ENCODE measurements at regions of chr9 and their contacts with region 1.

Region 1: DNA sequence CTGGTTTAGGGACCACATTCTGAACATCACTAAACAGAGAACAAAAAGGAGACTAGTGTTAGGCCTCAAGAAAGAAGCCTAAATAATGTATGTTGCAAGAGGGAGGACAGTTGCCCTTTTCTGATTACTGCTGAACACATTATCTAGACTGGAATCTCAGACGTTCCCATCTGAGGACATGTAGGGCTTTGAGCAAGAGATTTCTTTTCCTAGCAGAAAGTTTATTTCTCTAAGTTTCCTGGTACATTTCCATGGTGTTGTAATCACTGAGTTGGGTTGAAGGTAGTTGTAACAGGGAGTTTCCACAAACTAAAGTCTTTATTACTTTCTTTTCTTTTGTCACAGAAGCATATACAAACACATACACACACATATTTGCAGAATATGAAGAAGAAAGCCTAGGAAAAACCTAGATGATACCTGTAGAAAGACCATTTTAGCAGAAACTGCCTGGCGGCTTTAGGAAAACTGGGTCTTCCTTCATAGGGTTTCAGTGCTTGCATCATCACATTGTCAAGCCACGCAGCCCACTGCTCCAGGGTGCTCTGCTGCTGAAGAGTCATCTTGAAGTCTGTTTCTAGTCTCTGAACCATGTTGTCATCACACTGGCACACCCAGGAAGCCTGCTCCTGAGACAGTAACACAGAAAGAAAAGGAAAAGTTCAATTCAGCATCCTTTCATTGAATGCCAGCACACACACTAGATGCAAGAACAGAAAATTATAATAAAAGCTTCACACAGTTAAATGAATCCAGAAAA is 269.1 kb downstream of the RFX3 start:
- DNase-seq: no peak
- H3K4me3 ChIP-seq: no peak overlapping the region
- CTCF ChIP-seq: no peak
- POLR2A ChIP-seq: no peak

Region 2: DNA sequence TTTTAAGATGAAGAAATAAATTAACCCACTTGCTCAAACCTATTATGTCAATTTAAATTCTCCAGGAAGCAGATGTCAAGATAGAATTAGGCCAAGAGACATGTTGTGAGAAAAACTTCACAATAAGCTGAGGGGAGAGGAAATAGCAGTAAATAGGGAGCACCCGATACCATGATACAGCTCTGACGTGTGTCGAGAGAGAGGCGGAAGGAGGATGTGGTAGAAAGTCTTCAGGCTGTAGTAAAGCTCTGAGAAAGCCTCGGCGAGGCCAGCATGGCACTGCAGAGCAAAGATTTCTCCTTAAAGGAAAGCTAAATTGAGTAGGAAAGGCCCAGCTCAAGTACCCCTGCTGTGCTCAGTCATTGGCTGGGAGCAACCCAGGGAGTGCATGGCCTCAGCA is 406.8 kb before region 1 on chr9:
- intact Hi-C with region 1: no loop called
- DNase-seq: no peak
- H3K4me3 ChIP-seq: no peak overlapping the region
- CTCF ChIP-seq: no peak
- POLR2A ChIP-seq: no peak

Region 3: DNA sequence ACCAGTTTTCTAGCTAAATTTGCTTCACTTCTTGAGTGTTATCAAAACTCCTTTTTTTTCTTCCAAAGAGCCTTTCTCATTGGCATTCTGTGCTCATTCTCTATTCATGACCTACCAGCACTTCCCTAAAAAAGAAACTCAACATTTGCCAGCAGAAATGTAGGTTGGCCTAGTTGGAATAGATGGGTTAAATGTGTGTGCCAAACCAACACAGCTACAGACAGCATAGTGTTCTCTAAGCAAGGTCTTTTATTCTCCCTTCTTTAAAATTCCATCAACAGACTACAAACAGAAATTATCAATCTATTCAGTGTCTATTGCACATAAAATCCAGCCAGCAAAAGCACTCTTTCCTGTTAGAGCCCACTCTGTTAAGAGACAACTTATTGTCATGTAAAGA is 157.1 kb before region 1 on chr9:
- intact Hi-C with region 1: no loop called
- DNase-seq: no peak
- H3K4me3 ChIP-seq: no peak overlapping the region
- CTCF ChIP-seq: no peak
- POLR2A ChIP-seq: no peak

Region 4: DNA sequence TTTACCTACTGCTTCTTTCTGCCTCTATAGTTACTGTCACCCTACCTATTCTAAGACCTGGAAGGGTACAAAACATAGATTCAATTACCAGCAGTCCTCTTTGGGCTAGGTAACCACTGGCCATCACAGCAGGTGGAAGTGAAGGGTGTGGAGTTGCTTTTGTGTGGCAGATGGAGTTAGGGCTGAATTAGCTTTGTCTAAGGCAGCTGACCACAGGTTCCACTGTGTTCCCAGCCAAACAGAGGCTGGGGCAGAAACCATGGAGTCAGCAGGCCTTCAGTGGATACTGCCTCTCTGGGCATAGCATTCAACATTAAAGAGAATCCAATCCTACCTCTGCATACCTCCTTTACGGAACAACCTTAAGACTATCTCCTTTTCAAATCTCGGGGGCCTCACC is 14.8 kb after region 1 on chr9:
- intact Hi-C with region 1: no loop called
- DNase-seq: no peak
- H3K4me3 ChIP-seq: no peak overlapping the region
- CTCF ChIP-seq: no peak
- POLR2A ChIP-seq: no peak

Region 5: GRCh38 chr9:3809724-3810123 is 553.0 kb after region 1 on chr9:
- intact Hi-C with region 1: loop called (anchors 5 kb)
- DNase-seq: no peak
- H3K4me3 ChIP-seq: no peak overlapping the region
- CTCF ChIP-seq: no peak
- POLR2A ChIP-seq: no peak